ENCODE measurements at regions of chr18 and their contacts with region 1.

Region 1: GRCh38 chr18:3665780-3666525 is 216.0 kb downstream of the TGIF1 start:
- DNase-seq: peak; percentile 99
- ATAC-seq: peak; percentile 90
- H3K4me3 ChIP-seq: peak overlapping the region; percentile 36 to 53 (median 42); a peak in 5 of 6 replicates
- H3K27ac ChIP-seq: peak overlapping the region; percentile 85
- H3K4me1 ChIP-seq: peaks cover 55% of the 10 kb centered on the region
- H3K27me3 ChIP-seq: no peaks in the 10 kb centered on the region
- CTCF ChIP-seq: peak; percentile 91
- EP300 ChIP-seq: peak; percentile 74 to 98; a peak in 3 of 4 replicates
- POLR2A ChIP-seq: peak; percentile 24 to 79; a peak in 3 of 4 replicates
- RAD21 ChIP-seq: peak; percentile 86

Region 2: DNA sequence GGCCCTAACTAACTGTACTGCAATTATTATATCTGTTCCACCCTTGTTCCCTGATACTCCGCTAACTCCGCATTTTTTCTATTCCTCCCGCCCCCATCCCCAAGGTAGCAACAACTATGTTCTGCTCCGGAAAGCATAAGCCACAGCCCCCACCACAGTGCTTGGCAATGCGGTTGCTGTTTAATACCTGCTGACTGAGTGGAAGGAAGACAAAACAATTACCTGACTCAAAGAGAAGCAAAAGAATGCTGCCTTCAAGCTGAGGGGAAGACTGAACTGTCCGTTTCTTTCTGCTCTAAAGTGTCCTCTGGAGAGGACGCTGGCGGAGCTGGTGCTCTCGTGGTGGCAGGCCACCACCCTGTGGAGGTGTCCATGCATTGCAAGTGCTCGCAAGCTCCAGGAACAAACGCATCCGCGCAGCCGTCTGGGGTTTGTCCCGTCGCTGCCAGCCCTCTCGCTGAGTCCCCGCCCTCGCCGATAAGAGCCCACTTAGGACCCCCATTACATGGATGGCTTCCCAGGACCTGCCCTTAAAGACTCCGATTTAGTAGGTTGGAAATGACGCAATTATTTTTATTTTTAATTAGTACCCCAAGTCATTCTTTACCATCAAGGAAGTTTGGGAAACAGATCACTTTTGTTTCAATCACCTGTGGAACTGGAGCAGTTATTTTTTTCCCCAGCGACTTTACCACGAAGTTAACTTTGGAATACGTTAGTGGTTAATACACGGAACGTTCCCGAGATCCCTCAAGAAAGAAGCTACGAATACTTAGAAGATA is 419.9 kb before region 1 on chr18:
- CTCF ChIA-PET with region 1: no interaction called
- POLR2A ChIA-PET with region 1: interaction called, 10 read pairs
- in situ Hi-C with region 1: no loop called
- intact Hi-C with region 1: no loop called
- DNase-seq: peak; percentile 81
- ATAC-seq: peak; percentile 80
- H3K4me3 ChIP-seq: peak overlapping the region; percentile 66 to 93 (median 92)
- H3K27ac ChIP-seq: peak overlapping the region; percentile 93
- H3K4me1 ChIP-seq: peaks cover 45% of the 10 kb centered on the region
- H3K27me3 ChIP-seq: no peaks in the 10 kb centered on the region; a peak in 2 of 5 replicates
- CTCF ChIP-seq: peak; percentile 99
- EP300 ChIP-seq: no peak
- POLR2A ChIP-seq: peak in 1 of 2 experiments; percentile 41; a peak in 3 of 4 replicates
- RAD21 ChIP-seq: peak; percentile 99

Region 3: DNA sequence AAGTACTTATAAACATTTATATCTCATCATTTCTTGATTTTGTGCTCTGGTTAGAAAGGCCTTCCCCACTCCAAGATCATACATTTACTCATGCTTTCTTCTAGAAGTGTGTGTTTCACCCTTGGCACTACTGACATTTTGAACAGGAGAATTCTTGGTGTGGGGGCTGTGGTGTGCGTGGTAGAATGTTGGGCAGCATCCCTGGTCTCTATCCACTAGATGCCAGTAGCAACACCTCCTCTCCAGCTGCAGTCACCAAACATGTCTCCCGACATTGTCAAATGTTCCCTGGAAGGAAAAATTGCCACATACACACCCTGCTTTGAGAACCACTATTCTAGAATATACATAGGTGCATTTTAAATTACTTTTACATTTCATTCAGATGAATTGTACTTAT is 224.7 kb before region 1 on chr18:
- CTCF ChIA-PET with region 1: interaction called, 6 read pairs
- POLR2A ChIA-PET with region 1: interaction called, 5 read pairs
- in situ Hi-C with region 1: no loop called
- intact Hi-C with region 1: loop called (anchors 1 kb)
- DNase-seq: peak; percentile 41
- ATAC-seq: peak; percentile 90
- H3K4me3 ChIP-seq: no peak overlapping the region
- H3K27ac ChIP-seq: no peak overlapping the region
- H3K4me1 ChIP-seq: peaks cover 15% of the 10 kb centered on the region
- H3K27me3 ChIP-seq: no peaks in the 10 kb centered on the region; a peak in 2 of 5 replicates
- CTCF ChIP-seq: peak; percentile 59
- EP300 ChIP-seq: no peak
- POLR2A ChIP-seq: no peak
- RAD21 ChIP-seq: no peak

Region 4: DNA sequence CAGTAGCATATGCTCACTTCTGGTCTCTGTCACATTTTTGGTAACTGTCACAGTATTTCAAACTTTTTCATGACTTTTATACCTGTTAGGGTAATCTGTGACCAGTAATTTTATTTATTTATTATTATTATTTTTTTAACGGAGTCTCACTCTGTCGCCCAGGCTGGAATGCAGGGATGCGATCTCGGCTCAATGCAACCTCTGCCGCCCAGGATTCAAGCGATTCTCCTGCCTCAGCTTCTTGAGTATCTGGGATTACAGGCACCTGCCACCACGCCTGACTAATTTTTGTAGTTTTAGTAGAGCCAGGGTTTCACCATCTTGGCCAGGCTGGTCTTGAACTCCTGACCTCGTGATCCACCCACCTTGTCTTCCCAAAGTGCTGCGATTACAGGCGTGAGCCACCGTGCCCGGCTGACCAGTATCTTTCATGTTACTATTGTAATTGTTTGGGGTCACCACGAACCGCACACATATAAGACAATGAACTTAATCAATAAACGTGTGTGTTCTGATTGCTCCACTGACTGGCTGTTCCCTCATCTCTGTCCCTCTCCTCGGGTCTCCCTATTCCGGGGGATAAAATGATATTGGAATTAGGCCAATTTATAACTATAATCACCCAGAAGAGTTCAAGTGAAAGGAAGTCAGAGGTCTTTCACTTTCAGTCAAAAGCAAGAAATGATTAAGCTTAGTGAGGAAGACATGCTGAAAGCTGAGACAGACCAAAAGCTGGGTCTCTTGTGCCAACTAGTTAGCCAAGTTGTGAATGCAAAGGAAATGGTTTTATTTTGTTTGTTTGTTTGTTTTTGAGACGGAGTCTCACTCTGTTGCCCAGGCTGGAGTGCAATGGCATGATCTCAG is 193.0 kb before region 1 on chr18:
- CTCF ChIA-PET with region 1: no interaction called
- POLR2A ChIA-PET with region 1: no interaction called
- in situ Hi-C with region 1: no loop called
- intact Hi-C with region 1: no loop called
- DNase-seq: no peak
- ATAC-seq: no peak
- H3K4me3 ChIP-seq: no peak overlapping the region
- H3K27ac ChIP-seq: no peak overlapping the region
- H3K4me1 ChIP-seq: peaks cover 16% of the 10 kb centered on the region
- H3K27me3 ChIP-seq: no peaks in the 10 kb centered on the region; a peak in 1 of 5 replicates
- CTCF ChIP-seq: no peak
- EP300 ChIP-seq: no peak
- POLR2A ChIP-seq: no peak
- RAD21 ChIP-seq: no peak

Region 5: GRCh38 chr18:3585656-3586509 is 80.1 kb before region 1 on chr18:
- CTCF ChIA-PET with region 1: interaction called, 12 read pairs
- POLR2A ChIA-PET with region 1: interaction called, 9 read pairs
- in situ Hi-C with region 1: loop called (anchors 5 kb)
- intact Hi-C with region 1: no loop called
- DNase-seq: peak; percentile 92
- ATAC-seq: peak; percentile 97
- H3K4me3 ChIP-seq: no peak overlapping the region
- H3K27ac ChIP-seq: no peak overlapping the region
- H3K4me1 ChIP-seq: peaks cover 47% of the 10 kb centered on the region
- H3K27me3 ChIP-seq: peaks cover 0 to 19% of the 10 kb centered on the region in 2 experiments; a peak in 3 of 5 replicates
- CTCF ChIP-seq: peak; percentile 94
- EP300 ChIP-seq: no peak
- POLR2A ChIP-seq: no peak
- RAD21 ChIP-seq: peak; percentile 83

Region 6: DNA sequence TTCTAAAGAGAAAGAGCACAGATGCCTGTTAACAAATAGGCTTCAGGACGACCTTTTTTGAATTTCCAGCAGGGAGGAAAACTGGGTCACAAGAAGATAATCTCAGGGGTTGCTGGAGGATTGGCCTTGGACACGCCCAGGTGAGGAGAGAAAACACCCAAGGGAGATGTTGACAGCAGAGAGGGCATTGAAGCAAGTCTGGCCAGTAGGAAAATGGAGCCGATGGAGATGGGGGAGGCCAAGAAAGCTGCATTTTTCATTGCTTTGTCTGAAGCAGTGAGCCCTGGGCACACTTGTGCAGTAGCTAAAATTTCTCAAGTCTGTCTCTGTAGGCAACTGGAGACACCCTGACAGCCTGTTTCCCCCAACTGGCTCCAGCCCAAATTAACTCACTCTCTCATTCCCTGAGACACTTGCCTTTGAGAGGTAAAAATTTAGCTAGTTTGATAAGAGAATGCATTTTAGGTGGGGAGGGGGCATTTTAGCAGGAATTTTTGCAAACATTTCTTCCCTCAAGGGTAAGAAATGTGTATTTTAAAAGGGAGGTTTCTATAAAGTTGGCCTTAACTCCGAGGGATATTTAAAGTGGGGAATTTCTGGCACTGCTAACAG is 50.5 kb before region 1 on chr18:
- CTCF ChIA-PET with region 1: no interaction called
- POLR2A ChIA-PET with region 1: interaction called, 107 read pairs
- in situ Hi-C with region 1: no loop called
- intact Hi-C with region 1: loop called (anchors 1 kb)
- DNase-seq: no peak
- ATAC-seq: no peak
- H3K4me3 ChIP-seq: no peak overlapping the region
- H3K27ac ChIP-seq: peak overlapping the region; percentile 39
- H3K4me1 ChIP-seq: peaks cover 79% of the 10 kb centered on the region
- H3K27me3 ChIP-seq: no peaks in the 10 kb centered on the region
- CTCF ChIP-seq: no peak
- EP300 ChIP-seq: no peak
- POLR2A ChIP-seq: no peak
- RAD21 ChIP-seq: no peak

Region 7: DNA sequence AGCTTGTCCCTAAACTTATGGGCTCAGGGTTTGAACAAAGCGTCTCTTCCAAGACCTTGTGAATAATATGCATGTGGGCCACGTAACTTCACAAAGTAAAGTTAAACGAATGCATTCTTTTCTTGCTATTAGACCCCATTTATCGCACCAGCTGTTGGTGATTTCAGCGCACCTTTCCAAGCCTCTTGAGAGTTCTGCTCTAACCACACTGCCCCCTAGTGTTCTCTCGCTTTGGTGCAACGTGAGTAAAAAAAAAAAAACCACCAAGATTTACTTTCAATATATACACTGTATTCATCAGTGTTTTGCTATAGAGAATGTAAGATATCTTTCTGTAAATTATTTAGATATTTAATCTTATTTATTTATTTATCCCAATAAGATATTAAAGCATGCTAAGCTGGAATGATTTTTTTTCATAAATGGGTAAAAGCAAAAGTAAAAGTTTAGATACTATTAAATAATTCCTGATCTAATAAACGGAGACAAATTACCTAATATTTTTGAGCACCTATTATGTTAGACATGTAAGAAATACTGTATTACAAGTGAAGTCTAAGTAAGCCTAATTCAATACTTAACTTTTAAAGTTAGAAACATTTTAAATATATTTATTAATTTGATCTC is 329.6 kb after region 1 on chr18:
- CTCF ChIA-PET with region 1: no interaction called
- POLR2A ChIA-PET with region 1: no interaction called
- in situ Hi-C with region 1: no loop called
- intact Hi-C with region 1: loop called (anchors 1 kb)
- DNase-seq: peak; percentile 56
- ATAC-seq: peak; percentile 35; the same call in 1 of the 3 replicates
- H3K4me3 ChIP-seq: no peak overlapping the region
- H3K27ac ChIP-seq: no peak overlapping the region
- H3K4me1 ChIP-seq: no peaks in the 10 kb centered on the region
- H3K27me3 ChIP-seq: peaks cover 0 to 6% of the 10 kb centered on the region in 2 experiments; a peak in 1 of 5 replicates
- CTCF ChIP-seq: peak; percentile 67
- EP300 ChIP-seq: no peak
- POLR2A ChIP-seq: no peak
- RAD21 ChIP-seq: no peak